ENCODE measurements at regions of chr4 and their contacts with region 1.

Region 1: GRCh38 chr4:38675146-38676121 is 11.4 kb downstream of the KLF3 start:
- DNase-seq: peak; percentile 67
- CTCF ChIP-seq: peak; percentile 84

Region 2: DNA sequence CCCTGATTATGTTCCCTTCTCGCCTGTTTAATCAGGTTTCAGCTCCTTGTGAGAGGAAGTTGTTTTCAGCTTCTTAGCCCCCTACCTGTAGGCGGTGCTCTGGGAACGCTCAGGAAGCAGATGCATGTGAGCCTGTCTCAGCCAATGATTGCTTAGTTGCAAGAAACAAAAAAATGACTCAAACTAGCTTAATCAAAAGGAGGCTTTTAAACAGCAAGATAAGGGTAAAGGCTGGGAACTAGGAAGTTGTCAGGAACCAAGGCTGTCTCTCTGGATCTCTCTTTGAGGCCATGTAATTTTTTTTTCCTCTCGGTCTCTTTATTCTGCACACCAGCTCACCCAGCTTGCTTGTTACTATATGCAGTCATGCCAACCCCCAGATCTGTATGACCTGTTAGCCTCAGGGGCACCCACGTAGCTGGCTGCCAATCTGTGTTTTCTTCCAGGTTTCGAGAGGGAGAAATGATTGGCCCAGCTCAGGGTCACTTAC is 606.1 kb before region 1 on chr4:
- CTCF ChIA-PET with region 1: interaction called, 11 read pairs
- POLR2A ChIA-PET with region 1: no interaction called
- DNase-seq: peak; percentile 44
- CTCF ChIP-seq: no peak

Region 3: DNA sequence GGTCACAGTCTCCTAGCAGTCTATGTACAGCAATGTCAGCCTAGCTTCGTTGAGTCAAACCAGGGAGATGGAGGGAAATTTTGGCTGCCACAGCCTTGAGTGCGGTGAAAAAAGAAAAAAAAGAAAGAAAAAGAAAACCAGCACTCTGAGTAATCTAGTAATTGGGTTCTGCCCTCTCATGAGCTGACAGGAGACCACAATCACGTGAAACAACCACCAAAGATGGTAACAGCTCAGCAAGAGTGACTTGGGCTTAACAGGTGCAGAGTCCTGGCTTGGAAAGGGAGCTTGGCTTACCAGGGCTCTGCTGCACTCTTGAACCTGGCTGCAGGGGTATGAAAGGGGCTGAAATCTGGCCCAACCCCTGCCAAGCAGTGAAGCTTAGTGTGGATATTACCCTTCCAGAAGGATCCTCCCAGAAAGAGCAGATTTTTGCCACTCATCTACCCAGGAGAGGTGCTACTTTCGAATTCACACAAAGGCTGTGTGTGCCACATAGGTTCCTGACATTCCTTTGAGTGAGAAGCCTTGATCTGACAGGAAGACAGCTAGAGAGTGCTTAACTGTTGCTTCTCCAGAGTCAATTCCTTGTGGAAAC is 364.9 kb before region 1 on chr4:
- CTCF ChIA-PET with region 1: interaction called, 20 read pairs
- POLR2A ChIA-PET with region 1: no interaction called
- DNase-seq: peak; percentile 75
- CTCF ChIP-seq: no peak

Region 4: DNA sequence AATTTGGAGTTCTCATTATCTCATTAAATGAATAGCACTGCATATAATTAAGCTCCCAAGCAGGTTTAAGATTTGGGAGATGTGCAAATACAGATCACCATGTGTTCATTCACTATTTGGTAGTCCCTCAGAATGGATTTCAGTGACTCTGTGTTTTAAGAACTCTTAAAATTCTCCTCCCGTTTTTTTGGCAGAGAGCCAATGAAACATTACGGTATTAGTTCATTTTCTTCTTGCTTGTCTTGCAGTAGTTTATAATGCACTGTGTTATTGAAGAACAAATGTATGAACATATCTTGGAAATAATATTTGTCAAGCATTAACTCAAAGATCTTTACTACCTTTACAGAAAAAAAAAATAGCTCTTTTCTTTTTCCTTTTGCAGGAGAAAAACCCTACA is 21.3 kb after region 1 on chr4:
- CTCF ChIA-PET with region 1: interaction called, 28 read pairs
- POLR2A ChIA-PET with region 1: no interaction called
- DNase-seq: no peak
- CTCF ChIP-seq: no peak

Region 5: DNA sequence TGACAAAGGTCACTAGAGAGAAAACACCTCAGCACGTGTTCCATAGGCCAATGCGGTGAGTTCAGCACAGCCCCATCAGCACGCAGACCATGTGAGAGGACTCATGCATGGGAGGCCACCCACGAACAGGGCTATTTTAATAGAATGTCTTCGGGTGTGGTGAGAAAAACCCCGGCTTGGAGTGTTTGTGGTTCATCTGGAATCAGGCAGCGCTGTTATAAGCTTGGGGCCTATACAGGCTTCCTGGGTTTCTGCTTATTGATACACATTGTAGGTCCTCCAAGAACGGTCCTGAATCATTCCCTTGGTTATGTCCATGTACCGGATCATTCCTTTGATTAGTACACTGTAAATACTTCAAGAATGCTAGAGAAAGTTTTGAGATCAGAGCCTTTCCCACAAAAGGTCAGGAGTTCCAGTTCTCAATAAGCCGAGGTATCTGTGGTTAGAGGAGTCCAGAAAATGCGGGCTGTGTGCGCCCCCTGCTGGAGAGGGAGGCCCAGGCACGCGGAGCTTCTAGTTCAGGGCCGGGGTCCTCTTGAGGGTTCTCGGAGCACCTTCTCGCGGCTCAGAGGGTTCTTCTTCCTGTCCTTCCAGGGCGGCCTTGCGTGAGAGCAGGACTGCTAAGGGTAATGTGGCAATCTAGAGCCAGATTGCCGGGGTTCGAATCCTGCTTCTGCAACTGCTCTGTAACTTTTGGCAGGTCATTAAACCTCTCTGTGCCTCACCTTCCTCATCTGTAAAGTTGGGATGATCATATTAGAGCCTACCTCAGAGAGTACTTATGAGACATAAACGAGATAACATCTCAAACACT is 55.6 kb after region 1 on chr4:
- CTCF ChIA-PET with region 1: interaction called, 10 read pairs
- POLR2A ChIA-PET with region 1: no interaction called
- DNase-seq: peak; percentile 81
- CTCF ChIP-seq: peak; percentile 87

Region 6: DNA sequence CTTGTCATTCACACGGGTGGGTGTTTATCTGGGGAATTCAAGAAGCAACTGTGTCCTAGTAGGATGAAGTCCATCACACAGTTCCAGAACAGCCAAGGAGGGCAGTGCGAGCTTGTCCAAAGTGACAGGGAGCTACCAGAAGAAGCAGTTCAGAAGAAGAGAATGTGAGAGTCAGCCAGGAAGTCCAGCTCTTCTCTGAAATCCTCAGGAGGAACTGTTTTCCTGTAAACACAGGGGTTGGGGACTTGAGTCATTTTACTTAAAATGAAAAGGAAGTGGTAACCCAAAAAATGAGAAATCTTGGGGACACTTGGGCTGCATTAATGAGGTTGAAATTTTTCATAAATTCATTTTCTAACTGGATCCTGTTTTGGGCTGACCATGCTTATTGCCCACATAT is 115.6 kb after region 1 on chr4:
- CTCF ChIA-PET with region 1: no interaction called
- POLR2A ChIA-PET with region 1: no interaction called
- DNase-seq: no peak
- CTCF ChIP-seq: no peak

Region 7: DNA sequence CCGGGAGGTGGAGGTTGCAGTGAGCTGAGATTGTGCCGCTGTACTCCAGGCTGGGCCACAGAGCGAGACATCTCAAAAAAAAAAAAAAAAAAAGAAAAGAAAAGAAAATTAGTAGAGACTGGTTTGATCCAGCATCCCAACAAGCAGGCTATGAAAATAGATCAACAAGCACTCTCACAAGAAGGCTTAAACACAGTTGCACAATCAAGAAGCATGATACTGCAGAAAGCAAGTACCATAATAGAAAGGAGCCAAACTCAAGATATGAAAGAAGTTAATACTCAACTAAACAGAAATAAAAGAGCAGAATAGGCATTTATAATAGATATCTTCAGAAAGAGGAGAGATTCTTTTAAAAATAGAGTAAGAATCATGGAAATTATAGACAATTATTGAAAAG is 170.6 kb after region 1 on chr4:
- CTCF ChIA-PET with region 1: no interaction called
- POLR2A ChIA-PET with region 1: no interaction called
- DNase-seq: no peak
- CTCF ChIP-seq: no peak

Region 8: DNA sequence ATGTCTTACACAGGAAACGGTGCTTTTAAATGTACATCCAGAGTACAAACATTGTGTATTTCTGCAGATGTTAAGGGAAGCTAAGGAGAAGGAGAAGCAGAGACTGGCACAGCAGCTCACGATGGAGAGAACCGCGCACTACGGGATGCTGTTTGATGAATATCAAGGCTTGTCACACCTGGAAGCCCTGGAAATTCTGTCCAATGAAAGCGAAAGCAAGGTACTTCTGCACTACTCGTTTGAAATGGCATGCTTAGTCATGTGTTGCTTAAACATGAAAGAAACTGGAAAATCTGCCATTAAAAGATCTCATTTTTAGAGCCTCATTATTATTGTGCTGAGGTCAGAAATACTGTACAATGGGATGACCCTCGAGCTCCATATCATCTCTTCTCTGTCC is 239.4 kb after region 1 on chr4:
- CTCF ChIA-PET with region 1: no interaction called
- POLR2A ChIA-PET with region 1: no interaction called
- DNase-seq: peak; percentile 42
- CTCF ChIP-seq: no peak